ENCODE measurements at regions of chr12 and their contacts with region 1.

Region 1: DNA sequence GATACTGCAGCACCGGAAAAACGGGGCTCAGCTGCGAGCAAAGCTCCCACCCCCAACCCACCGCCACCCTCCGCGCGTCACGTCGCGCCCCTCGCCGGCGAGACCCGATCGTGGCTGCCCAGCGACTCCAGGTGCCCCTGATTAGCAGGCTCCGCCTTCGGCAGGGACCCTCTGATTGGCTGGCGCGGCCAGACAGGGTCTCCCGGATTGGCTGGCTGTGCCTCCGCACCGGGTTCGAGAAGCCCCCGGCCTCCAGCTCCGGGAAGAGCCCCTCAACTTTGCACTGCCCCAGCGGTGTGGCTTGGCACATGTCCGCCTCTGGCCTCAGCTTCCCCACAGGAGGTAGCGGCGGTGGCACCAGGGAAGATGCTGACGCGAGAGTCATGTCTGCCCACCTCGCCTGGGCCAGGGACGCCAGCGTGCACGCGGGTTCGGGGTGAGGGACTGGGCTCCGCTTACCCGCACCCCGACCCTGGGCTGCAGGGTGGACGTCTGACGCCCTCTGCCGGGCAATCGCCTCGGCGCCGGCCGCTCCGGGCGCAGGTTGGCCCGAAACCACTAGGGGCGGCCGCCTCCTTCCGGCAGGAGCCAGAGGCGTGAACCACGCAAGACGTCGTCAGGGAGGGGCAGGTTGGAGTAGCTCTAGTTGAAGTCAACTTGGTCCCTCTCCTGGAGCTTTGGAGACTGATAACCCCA is 498 bp upstream of the RHOF start:
- DNase-seq: peak; percentile 96
- H3K4me3 Mint-ChIP-seq: peak overlapping the region; percentile 84
- H3K27ac Mint-ChIP-seq: peak overlapping the region; percentile 94
- H3K4me1 Mint-ChIP-seq: peaks cover 57% of the 10 kb centered on the region
- H3K27me3 Mint-ChIP-seq: no peaks in the 10 kb centered on the region

Region 2: DNA sequence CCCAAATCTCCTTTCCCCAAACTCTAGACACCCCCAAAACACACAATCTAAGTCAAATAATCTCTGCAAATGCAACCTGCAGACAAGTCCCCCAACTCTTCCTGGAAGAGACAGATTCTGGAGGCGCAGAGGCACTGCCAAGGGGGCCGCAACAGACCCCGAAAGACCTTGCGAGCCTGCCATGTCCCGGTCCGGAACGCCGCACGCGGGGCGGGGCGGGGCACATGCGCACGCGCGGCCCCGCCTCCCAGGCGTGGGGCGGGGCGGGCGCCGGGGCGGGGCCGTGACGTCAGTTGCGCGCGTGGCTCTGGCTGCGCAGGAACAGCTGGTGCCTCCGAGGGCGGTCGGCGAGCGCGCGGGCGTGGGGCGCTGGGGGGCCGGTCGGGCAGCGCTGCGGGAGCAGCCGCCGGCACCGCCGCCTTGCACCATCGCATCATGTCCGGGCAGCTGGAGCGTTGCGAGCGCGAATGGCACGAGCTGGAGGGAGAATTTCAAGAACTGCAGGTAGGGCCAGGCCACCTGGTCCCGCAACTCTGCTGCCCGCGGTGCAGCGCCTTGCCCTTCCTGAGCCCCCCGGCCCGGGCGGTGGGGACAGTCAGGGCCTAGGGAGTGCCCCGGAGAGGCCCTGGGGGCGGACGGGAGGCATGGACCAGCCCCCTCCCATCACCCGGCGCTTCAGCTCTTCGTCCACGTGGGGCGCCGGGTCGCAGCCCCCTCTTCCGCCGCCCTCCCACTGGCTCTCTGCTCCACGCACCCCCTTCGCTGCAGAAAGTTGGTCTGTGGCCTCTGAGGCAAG is 81.3 kb before region 1 on chr12 and contains the start of gene TMEM120B:
- intact Hi-C with region 1: loop called (anchors 5 kb)
- DNase-seq: peak; percentile 82
- H3K4me3 Mint-ChIP-seq: peak within 1 kb of the TSS; percentile 97
- H3K27ac Mint-ChIP-seq: peak within 1 kb of the TSS; percentile 85
- H3K4me1 Mint-ChIP-seq: peaks cover 18% of the 10 kb centered on the region
- H3K27me3 Mint-ChIP-seq: peaks cover 1% of the 10 kb centered on the region
- total RNA-seq, gene TMEM120B: 14.1 and 14.2 TPM in 2 replicates

Region 3: DNA sequence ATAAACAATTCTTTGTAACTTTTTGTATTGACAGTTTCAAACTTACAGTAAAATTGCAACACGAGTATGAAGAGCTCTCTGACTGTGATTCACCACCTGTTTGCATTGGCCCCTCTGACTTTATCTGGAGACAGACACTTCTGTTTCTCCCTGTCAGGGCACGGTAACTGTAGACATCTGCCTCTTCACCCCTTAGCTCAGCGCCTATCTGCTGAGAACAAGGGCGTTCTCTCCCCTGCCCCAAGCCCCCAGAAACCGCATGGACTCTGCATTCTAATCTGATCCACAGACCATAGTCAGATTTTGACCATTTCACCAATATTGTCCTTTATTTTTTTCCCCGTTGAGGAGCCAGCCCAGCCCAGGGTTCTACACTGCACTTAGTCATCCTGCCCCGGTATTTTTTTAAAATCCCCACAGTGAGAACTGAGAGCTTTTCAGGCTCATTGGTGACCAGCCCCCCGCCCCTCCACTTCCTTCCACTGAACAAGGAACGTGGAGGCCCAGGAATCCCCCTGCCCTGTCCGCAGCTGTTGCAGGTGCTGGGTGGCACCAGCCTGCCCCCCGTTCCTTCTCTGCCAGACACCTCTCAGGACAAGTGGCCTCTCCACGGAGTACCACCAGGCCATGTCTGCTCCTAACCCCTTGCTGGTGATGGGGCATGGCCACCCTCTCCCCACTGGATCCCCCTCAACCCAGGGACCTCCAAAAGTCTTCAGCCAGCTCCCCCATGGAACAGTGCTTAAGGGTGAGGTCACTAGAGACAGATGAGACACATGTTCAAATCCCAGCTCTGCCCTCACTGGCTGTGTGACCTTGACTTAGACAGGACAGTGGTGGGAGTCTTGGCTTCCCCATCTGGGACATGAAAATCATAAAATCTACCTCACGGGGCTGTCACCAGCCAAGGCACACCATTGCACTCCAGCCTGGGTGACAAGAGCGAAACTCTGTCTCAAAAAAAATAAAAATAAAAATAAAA is 11.7 kb before region 1 on chr12:
- intact Hi-C with region 1: loop called (anchors 1 kb)
- DNase-seq: no peak
- H3K4me3 Mint-ChIP-seq: peak overlapping the region; percentile 74
- H3K27ac Mint-ChIP-seq: peak overlapping the region; percentile 98
- H3K4me1 Mint-ChIP-seq: peaks cover 43% of the 10 kb centered on the region
- H3K27me3 Mint-ChIP-seq: no peaks in the 10 kb centered on the region

Region 4: GRCh38 chr12:121839106-121839992 is 45.4 kb after region 1 on chr12:
- intact Hi-C with region 1: loop called (anchors 2 kb)
- DNase-seq: peak; percentile 99
- H3K4me3 Mint-ChIP-seq: peak overlapping the region; percentile 97
- H3K27ac Mint-ChIP-seq: peak overlapping the region; percentile 90
- H3K4me1 Mint-ChIP-seq: peaks cover 4% of the 10 kb centered on the region
- H3K27me3 Mint-ChIP-seq: no peaks in the 10 kb centered on the region

Region 5: GRCh38 chr12:122021822-122022526 is 228.0 kb after region 1 on chr12 and contains the start of gene BCL7A:
- intact Hi-C with region 1: no loop called
- DNase-seq: peak; percentile 56
- H3K4me3 Mint-ChIP-seq: peak within 1 kb of the TSS; percentile 91
- H3K27ac Mint-ChIP-seq: peak within 1 kb of the TSS; percentile 86
- H3K4me1 Mint-ChIP-seq: peaks cover 8% of the 10 kb centered on the region
- H3K27me3 Mint-ChIP-seq: peaks cover 12% of the 10 kb centered on the region
- total RNA-seq, gene BCL7A: 11.4 and 12.5 TPM in 2 replicates

Region 6: GRCh38 chr12:122166422-122167349 is 372.7 kb after region 1 on chr12:
- intact Hi-C with region 1: loop called (anchors 10 kb)
- DNase-seq: peak; percentile 47
- H3K4me3 Mint-ChIP-seq: no peak overlapping the region
- H3K27ac Mint-ChIP-seq: peak overlapping the region; percentile 77
- H3K4me1 Mint-ChIP-seq: peaks cover 32% of the 10 kb centered on the region
- H3K27me3 Mint-ChIP-seq: no peaks in the 10 kb centered on the region

Measured in activated T-helper 2 cell treated with anti-CD3 and anti-CD28 coated beads, Interferon-gamma antibody, Interleukin-2, Interleukin-4, amounts not matched to agents 10 μg/mL and 5 μg/mL and 100 μg/mL, durations not matched to agents 14 hours and 24 hours and 36 hours (primary cell).